A549 (cell line): ENCODE measurements at regions of chr14 and their contacts with region 1.

Region 1: DNA sequence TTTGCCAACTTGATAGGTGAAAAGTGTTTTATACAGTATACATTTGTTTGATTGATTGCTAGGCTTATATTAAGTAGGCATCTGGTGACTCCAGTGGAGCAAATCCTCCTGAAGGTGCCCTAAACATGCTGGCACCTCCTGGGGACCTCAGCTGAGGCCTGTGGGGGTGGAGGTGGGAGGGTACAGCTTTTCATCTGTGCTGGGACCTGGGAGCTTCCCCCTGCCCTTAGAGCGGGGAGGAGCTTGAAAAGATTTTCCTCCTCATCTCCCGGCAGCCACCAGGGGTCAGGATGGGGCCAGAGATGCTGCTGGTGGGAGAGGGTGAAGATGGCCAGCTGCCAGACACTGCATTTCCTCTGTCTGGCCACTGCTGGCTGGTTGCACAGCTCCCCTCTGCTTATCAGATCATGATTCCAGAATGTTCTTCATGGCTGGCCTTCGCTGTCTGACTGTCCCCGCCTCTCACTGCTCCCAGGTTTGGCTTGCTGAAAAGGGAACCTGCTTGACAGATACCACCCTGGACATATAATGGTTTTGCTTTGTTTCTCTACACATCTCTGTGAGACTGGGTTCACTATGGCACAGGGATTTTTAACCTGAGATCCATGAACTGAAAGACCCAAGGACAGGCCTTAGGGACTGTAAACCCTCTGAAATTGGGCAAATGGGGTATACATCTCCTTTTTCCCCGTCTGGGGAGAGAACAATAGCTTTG is 10.5 kb upstream of the JPH4 start:
- DNase-seq: peak; percentile 88 to 90
- ATAC-seq: peak; percentile 99 to 100
- H3K4me3 ChIP-seq: no peak overlapping the region
- H3K27ac ChIP-seq: peak overlapping the region in 1 of 2 experiments; percentile 65; a peak in 2 of 6 replicates
- H3K4me1 ChIP-seq: peaks cover 8% of the 10 kb centered on the region; the same call in 2 of the 3 replicates
- CTCF ChIP-seq: peak; percentile 77
- EP300 ChIP-seq: no peak
- POLR2A ChIP-seq: no peak
- RAD21 ChIP-seq: peak; percentile 82 to 87

Region 2: DNA sequence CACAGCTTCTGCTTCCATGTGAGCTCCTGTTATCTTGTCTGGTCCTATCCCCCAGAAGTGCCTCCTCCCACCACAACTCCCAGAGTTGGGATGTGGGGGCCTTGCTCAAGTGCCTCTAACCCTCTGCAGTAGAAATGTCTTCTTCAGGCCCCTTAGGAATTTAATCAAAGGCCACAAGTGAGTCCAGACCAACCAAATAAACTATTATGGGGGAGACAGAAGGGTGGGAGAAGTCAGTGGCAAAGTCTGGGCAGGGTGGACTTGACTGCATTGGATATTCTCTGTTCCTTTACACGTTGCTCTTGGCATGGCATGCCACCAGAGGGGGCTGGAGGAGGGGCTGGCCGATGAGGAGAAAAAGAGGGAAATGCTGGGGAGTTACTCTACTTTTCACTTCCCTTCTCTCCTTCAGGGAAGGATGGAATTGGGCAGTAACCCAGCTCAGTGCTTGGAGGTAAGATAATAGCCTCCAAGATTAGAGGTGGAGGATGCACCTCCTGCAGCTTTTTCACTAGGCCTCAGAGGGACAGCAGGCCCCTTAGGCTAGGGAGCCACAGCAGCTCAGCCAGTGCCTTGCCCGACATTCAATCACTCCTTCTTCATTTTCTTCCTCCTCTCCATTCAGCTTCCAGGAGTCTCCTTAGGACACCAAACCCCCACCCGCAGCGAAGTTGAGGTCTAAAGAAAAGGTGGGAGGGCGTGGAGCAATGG is 20.3 kb before region 1 on chr14:
- CTCF ChIA-PET with region 1: interaction called, 13 read pairs
- POLR2A ChIA-PET with region 1: no interaction called
- DNase-seq: peak in 1 of 2 experiments; percentile 42
- ATAC-seq: peak in 1 of 2 experiments; percentile 39; a peak in 2 of 6 replicates
- H3K4me3 ChIP-seq: no peak overlapping the region
- H3K27ac ChIP-seq: peak overlapping the region; percentile 90 to 97
- H3K4me1 ChIP-seq: peaks cover 20% of the 10 kb centered on the region
- CTCF ChIP-seq: peak; percentile 24; the same call in 2 of the 3 replicates
- EP300 ChIP-seq: no peak
- POLR2A ChIP-seq: no peak
- RAD21 ChIP-seq: no peak

Region 3: GRCh38 chr14:23605931-23606585 is 17.0 kb after region 1 on chr14:
- CTCF ChIA-PET with region 1: interaction called, 13 read pairs
- POLR2A ChIA-PET with region 1: no interaction called
- DNase-seq: no peak
- ATAC-seq: no peak
- H3K4me3 ChIP-seq: no peak overlapping the region
- H3K27ac ChIP-seq: no peak overlapping the region
- H3K4me1 ChIP-seq: no peaks in the 10 kb centered on the region
- CTCF ChIP-seq: no peak
- EP300 ChIP-seq: no peak
- POLR2A ChIP-seq: no peak
- RAD21 ChIP-seq: no peak

Region 4: GRCh38 chr14:23929822-23930294 is 340.8 kb after region 1 on chr14:
- CTCF ChIA-PET with region 1: interaction called, 19 read pairs
- POLR2A ChIA-PET with region 1: no interaction called
- DNase-seq: peak; percentile 68 to 73
- ATAC-seq: peak; percentile 87 to 99
- H3K4me3 ChIP-seq: no peak overlapping the region
- H3K27ac ChIP-seq: no peak overlapping the region
- H3K4me1 ChIP-seq: no peaks in the 10 kb centered on the region
- CTCF ChIP-seq: peak; percentile 66
- EP300 ChIP-seq: no peak
- POLR2A ChIP-seq: no peak
- RAD21 ChIP-seq: peak; percentile 63 to 72

Region 5: DNA sequence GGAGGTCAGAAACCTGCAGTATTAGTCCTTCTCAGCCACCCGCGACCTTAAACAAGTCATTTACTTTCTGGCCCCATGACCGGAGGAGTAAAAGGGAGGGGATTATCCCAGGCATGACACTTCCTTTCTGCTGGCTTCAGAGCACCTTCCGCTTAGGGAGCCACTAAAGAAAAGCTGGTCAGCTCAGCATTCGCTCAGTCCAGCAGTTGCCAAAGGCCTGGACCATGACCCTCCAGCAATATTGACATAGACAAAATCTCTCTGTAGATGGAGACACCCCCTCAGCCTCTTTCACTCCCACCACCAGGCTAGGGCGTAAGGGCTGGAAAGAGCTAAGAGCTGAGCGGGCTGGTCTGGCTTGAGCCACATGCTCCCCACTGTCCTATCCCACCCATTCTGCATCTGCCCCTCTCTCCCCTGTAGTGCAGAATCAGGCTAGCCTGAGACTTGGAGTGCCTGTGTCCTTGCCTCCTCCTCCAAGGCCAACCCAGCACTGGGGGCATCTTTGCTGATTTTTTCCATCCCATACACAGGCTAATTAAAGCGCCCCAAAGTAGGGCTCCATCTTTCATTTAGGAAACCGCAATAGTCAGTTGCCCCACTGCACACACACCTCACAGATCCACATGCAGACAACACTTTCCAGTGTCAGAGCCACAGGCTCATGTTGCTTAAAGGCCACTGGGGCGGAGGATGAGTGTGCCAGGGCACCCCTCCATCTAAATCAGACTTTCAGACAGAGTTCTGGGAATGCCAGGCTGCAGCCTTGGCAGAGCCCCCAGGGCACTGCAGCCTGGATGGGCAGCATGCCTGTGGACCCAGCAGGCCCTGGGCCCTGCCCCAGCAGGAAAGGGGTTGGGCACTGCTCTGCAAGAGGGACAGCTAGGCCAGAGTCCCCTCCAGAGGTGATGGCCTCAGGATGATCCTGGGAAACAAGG is 478.4 kb after region 1 on chr14:
- CTCF ChIA-PET with region 1: no interaction called
- POLR2A ChIA-PET with region 1: no interaction called
- DNase-seq: no peak
- ATAC-seq: no peak
- H3K4me3 ChIP-seq: no peak overlapping the region
- H3K27ac ChIP-seq: no peak overlapping the region
- H3K4me1 ChIP-seq: no peaks in the 10 kb centered on the region
- CTCF ChIP-seq: no peak
- EP300 ChIP-seq: no peak
- POLR2A ChIP-seq: no peak
- RAD21 ChIP-seq: no peak